CD8-positive, alpha-beta T cell (primary cell): ENCODE measurements at regions of chr4 and their contacts with region 1.

Region 1: GRCh38 chr4:77385124-77385969 is 220.3 kb upstream of the CXCL13 start:
- DNase-seq: peak; percentile 7 to 68 (median 41)
- ATAC-seq: peak; percentile 29
- H3K4me3 ChIP-seq: no peak overlapping the region
- H3K4me3 Mint-ChIP-seq: no peak overlapping the region
- H3K27ac ChIP-seq: no peak overlapping the region
- H3K27ac Mint-ChIP-seq: no peak overlapping the region
- H3K4me1 ChIP-seq: no peaks in the 10 kb centered on the region
- H3K4me1 Mint-ChIP-seq: no peaks in the 10 kb centered on the region
- H3K27me3 ChIP-seq: no peaks in the 10 kb centered on the region
- H3K27me3 Mint-ChIP-seq: no peaks in the 10 kb centered on the region
- CTCF ChIP-seq: peak; percentile 64

Region 2: DNA sequence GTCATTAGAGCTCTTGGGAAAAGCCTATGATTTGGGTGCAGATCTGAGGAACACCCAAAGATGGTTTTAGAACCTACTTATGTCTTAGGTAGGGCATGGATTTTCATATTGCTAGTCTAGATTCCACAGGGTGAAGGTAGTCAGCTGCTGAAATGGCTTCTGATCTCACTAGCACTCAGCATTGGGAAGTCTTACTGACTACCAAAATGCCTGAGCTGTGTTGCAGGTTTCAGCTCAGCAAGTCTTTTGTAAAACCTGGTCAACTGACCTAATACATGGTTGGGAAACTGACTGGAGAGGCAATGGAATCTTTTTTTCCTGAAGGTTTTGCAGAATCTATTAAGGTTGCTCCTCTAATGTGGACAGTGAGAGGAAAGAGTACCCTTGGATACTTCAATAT is 91.9 kb before region 1 on chr4:
- CTCF ChIA-PET with region 1: no interaction called
- POLR2A ChIA-PET with region 1: no interaction called
- intact Hi-C with region 1: no loop called
- DNase-seq: no peak
- ATAC-seq: no peak
- H3K4me3 ChIP-seq: no peak overlapping the region
- H3K4me3 Mint-ChIP-seq: no peak overlapping the region
- H3K27ac ChIP-seq: no peak overlapping the region
- H3K27ac Mint-ChIP-seq: no peak overlapping the region
- H3K4me1 ChIP-seq: no peaks in the 10 kb centered on the region
- H3K4me1 Mint-ChIP-seq: no peaks in the 10 kb centered on the region
- H3K27me3 ChIP-seq: no peaks in the 10 kb centered on the region
- H3K27me3 Mint-ChIP-seq: peaks cover 4% of the 10 kb centered on the region
- CTCF ChIP-seq: no peak

Region 3: DNA sequence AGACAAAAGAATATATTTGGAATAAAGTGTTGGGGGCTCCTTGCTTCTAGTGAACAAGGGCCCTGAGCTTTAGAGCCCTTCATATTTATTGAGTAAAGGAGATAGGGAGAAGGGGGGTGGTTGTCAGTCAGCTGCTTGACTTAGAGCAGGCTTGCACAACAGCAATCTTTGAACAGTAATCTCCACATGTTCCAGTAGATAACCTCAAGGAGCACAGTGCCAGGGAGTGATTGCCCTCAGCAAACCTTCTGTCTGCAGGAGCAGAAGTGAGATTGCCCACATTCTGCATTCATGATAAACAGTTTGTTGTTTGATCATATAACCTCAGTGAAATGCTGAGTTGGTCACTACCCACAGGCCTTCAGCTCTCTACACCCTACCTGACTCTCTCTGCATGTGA is 14.5 kb after region 1 on chr4:
- CTCF ChIA-PET with region 1: interaction called, 12 read pairs
- POLR2A ChIA-PET with region 1: no interaction called
- intact Hi-C with region 1: no loop called
- DNase-seq: no peak
- ATAC-seq: no peak
- H3K4me3 ChIP-seq: no peak overlapping the region
- H3K4me3 Mint-ChIP-seq: no peak overlapping the region
- H3K27ac ChIP-seq: no peak overlapping the region
- H3K27ac Mint-ChIP-seq: no peak overlapping the region
- H3K4me1 ChIP-seq: no peaks in the 10 kb centered on the region
- H3K4me1 Mint-ChIP-seq: no peaks in the 10 kb centered on the region
- H3K27me3 ChIP-seq: no peaks in the 10 kb centered on the region
- H3K27me3 Mint-ChIP-seq: peaks cover 7% of the 10 kb centered on the region
- CTCF ChIP-seq: no peak

Region 4: DNA sequence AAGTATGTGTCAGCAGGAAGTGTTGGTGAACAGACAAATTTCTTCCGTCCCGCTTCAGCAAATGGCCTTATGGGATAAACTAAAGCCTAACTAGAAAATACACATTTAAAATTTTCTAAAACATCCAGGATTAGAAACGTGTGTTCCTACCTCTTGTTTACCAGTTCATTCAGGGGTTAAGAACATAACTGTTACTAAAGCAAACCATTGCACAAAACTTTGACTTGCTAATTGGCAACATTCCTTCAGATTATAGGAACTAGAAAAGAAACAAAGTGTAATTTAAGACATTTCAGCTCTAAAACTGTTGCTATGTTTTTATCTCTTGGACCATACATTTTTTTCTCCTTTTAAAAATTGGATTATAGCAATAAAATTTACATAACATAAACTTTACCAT is 180.8 kb after region 1 on chr4:
- CTCF ChIA-PET with region 1: no interaction called
- POLR2A ChIA-PET with region 1: no interaction called
- intact Hi-C with region 1: no loop called
- DNase-seq: no peak
- ATAC-seq: no peak
- H3K4me3 ChIP-seq: no peak overlapping the region
- H3K4me3 Mint-ChIP-seq: no peak overlapping the region
- H3K27ac ChIP-seq: no peak overlapping the region
- H3K27ac Mint-ChIP-seq: no peak overlapping the region
- H3K4me1 ChIP-seq: no peaks in the 10 kb centered on the region
- H3K4me1 Mint-ChIP-seq: no peaks in the 10 kb centered on the region
- H3K27me3 ChIP-seq: no peaks in the 10 kb centered on the region
- H3K27me3 Mint-ChIP-seq: peaks cover 9% of the 10 kb centered on the region
- CTCF ChIP-seq: no peak